ENCODE measurements at regions of chr10 and their contacts with region 1.

Region 1: GRCh38 chr10:120962756-120963593 is 111.8 kb downstream of the WDR11 start:
- DNase-seq: no peak
- H3K4me3 ChIP-seq: no peak overlapping the region
- H3K27ac ChIP-seq: no peak overlapping the region
- H3K4me1 ChIP-seq: peaks cover 14% of the 10 kb centered on the region
- H3K27me3 ChIP-seq: peaks cover 2% of the 10 kb centered on the region
- CTCF ChIP-seq: no peak

Region 2: GRCh38 chr10:120999868-121000267 is 36.9 kb after region 1 on chr10:
- CTCF ChIA-PET with region 1: no interaction called
- dilution Hi-C with region 1: loop called (anchors 5 kb)
- in situ Hi-C with region 1: no loop called
- intact Hi-C with region 1: no loop called
- DNase-seq: no peak
- H3K4me3 ChIP-seq: no peak overlapping the region
- H3K27ac ChIP-seq: no peak overlapping the region
- H3K4me1 ChIP-seq: peaks cover 7% of the 10 kb centered on the region
- H3K27me3 ChIP-seq: peaks cover 7% of the 10 kb centered on the region
- CTCF ChIP-seq: peak; percentile 12 to 22

Region 3: DNA sequence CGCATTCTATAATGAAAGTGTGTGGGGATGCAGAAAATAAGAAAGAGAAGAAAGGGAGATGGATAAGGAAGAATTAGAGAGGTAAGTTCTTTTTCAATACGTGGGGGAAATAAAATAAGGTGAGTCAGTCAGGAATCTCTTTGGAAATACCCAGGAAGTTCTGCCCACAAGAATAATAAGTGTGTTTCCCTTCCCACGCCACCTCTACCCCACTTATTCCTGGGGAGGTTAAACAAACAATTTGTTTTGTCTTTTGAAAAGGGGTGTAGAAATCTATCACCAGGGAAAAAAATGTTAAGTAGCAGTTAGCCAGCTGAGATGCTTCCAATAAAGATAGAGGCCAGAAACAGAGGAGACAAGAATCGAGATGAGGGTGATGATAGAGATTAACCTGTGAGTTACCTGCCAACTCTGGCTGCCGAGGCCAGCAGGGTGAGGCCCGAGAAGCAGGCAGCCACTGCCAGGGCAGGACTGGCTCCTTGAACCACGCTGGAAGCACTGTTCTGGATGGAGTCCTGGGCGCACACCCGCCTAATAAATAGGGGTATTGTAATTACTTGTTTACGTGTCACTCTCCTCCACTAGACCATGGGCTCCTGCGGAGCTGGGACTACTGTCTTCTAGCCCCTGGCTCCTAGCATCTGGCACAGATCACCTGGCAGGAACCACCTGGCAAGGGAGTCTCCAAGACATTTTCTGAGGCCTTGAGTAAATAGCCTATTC is 444.0 kb after region 1 on chr10:
- CTCF ChIA-PET with region 1: no interaction called
- dilution Hi-C with region 1: no loop called
- in situ Hi-C with region 1: no loop called
- intact Hi-C with region 1: no loop called
- DNase-seq: peak; percentile 81
- H3K4me3 ChIP-seq: no peak overlapping the region
- H3K27ac ChIP-seq: peak overlapping the region; percentile 48
- H3K4me1 ChIP-seq: peaks cover 20% of the 10 kb centered on the region
- H3K27me3 ChIP-seq: no peaks in the 10 kb centered on the region
- CTCF ChIP-seq: no peak

Region 4: DNA sequence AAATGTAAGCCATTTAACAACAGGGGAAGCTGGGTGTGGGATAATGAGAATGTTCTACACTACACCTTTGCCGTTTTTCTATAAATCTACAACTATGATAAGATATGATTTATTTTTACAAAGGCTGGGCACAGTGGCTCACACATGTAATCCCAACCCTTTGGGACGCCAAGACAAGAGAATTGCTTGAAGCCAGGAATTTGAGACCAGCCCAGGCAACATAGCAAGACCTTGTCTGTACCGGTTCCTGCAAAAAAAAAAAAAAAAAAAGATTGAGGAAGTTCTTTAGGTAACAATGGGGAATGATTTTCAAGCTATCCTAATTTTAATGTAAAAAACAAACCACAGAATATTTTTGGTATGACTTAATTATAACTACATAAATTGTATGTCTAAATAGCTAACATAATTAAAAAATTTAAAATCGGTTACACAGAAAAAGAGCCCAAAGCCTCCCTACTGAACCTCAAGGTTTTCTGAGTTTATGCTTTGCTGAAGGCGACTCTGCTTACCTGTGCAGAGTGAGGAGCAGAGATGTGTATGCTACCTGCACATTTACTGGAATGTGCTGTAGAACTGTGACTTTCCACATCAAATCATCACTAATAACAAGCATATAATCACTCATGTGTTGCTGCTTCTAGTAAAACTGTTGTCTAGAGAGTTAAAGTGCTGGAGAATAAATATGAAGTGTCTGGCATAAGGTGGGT is 801.4 kb after region 1 on chr10:
- CTCF ChIA-PET with region 1: no interaction called
- dilution Hi-C with region 1: no loop called
- in situ Hi-C with region 1: no loop called
- intact Hi-C with region 1: no loop called
- DNase-seq: peak; percentile 31
- H3K4me3 ChIP-seq: no peak overlapping the region
- H3K27ac ChIP-seq: peak overlapping the region; percentile 1
- H3K4me1 ChIP-seq: peaks cover 16% of the 10 kb centered on the region
- H3K27me3 ChIP-seq: no peaks in the 10 kb centered on the region
- CTCF ChIP-seq: no peak

Measured in mammary epithelial cell (primary cell).